ENCODE measurements at regions of chr21 and their contacts with region 1.

Region 1: GRCh38 chr21:46605767-46606426 is 1.0 kb upstream of the S100B start:
- DNase-seq: peak; percentile 75
- ATAC-seq: peak; percentile 95
- H3K4me3 Mint-ChIP-seq: peak overlapping the region; percentile 76
- H3K27ac Mint-ChIP-seq: peak overlapping the region; percentile 96
- H3K4me1 Mint-ChIP-seq: peaks cover 37% of the 10 kb centered on the region
- H3K27me3 Mint-ChIP-seq: no peaks in the 10 kb centered on the region

Region 2: DNA sequence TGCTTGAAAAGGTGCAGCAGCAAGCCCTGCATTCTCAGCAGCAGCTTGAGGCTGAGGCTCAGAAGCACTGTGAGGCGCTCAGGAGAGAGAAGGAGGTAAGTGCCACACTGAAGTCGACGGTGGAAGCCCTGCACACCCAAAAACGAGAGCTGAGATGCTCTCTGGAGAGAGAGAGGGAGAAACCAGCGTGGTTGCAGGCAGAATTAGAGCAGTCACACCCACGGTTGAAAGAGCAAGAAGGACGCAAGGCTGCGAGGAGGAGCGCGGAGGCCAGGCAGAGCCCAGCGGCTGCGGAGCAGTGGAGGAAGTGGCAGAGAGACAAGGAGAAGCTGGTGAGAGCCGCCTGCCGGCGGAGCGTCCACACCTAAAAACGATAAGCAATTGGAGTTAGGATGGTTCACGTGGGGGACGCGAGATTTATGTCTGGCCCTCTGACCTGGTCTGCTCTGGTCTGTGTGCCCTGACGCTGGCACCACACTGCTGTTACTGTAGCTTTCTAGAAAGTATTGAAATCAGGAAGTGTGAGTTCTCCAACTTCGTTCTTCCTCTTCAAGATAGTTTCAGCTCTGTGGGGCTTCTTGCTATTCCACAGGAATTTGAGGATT is 173.9 kb before region 1 on chr21:
- POLR2A ChIA-PET with region 1: no interaction called
- DNase-seq: no peak
- ATAC-seq: peak; percentile 67
- H3K4me3 Mint-ChIP-seq: peak overlapping the region; percentile 43
- H3K27ac Mint-ChIP-seq: peak overlapping the region; percentile 86
- H3K4me1 Mint-ChIP-seq: peaks cover 7% of the 10 kb centered on the region
- H3K27me3 Mint-ChIP-seq: no peaks in the 10 kb centered on the region

Region 3: GRCh38 chr21:46551636-46552241 is 54.2 kb before region 1 on chr21:
- POLR2A ChIA-PET with region 1: interaction called, 12 read pairs
- DNase-seq: peak; percentile 66
- ATAC-seq: peak; percentile 60
- H3K4me3 Mint-ChIP-seq: peak overlapping the region; percentile 76
- H3K27ac Mint-ChIP-seq: peak overlapping the region; percentile 93
- H3K4me1 Mint-ChIP-seq: peaks cover 40% of the 10 kb centered on the region
- H3K27me3 Mint-ChIP-seq: no peaks in the 10 kb centered on the region

Region 4: GRCh38 chr21:46622226-46622625 is 16.3 kb after region 1 on chr21:
- POLR2A ChIA-PET with region 1: interaction called, 25 read pairs
- DNase-seq: peak; percentile 59
- ATAC-seq: peak; percentile 92
- H3K4me3 Mint-ChIP-seq: peak overlapping the region; percentile 77
- H3K27ac Mint-ChIP-seq: peak overlapping the region; percentile 93
- H3K4me1 Mint-ChIP-seq: peaks cover 40% of the 10 kb centered on the region
- H3K27me3 Mint-ChIP-seq: no peaks in the 10 kb centered on the region

Measured in activated naive CD8-positive, alpha-beta T cell treated with anti-CD3 and anti-CD28 coated beads, Interleukin-2, amount 10 ng/mL, durations not matched to agents 7 days and 5 days (primary cell).